Common myeloid progenitor, CD34-positive (primary cell): ENCODE measurements at regions of chr1 and their contacts with region 1.

Region 1: DNA sequence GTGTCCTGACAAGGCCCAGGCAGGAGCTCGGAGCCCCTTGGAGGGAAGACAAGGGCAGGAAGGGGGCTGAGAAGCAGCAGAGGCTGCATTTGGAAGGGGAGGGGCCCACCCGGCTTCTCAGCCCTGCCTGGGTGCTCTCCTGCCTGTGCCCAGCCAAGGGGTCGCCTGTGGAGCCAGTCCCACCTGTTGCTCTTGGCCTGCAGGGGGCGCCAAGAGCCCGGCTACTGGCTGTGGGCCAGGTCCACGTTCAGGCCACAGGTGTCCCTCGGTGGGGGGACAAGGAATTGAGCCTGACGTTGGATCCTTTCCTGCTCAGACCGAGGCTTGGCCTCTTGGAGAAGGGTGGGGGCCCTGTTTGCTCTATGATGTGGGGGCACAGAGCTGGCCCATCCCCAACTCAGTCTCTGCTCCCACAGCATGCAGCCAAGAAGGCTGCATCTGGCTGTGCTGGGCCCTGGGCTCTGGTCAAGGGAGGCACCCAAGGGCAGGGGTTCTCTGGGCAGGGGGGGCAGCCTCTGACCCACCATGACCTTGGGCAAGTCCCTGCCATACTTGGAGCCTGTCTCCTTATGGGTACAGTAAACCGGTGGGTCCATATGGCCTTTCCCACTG is 10.9 kb downstream of the WNT4 start:
- DNase-seq: peak; percentile 39 to 55 (median 44)
- H3K4me3 ChIP-seq: no peak overlapping the region
- H3K27ac ChIP-seq: no peak overlapping the region
- H3K4me1 ChIP-seq: peaks cover 0 to 11% (median 8%) of the 10 kb centered on the region in 4 experiments
- H3K27me3 ChIP-seq: peaks cover 0 to 11% (median 3%) of the 10 kb centered on the region in 5 experiments

Region 2: GRCh38 chr1:21042929-21043605 is 1088.9 kb before region 1 on chr1:
- CTCF ChIA-PET with region 1: no interaction called
- POLR2A ChIA-PET with region 1: no interaction called
- DNase-seq: no peak
- H3K4me3 ChIP-seq: no peak overlapping the region
- H3K27ac ChIP-seq: no peak overlapping the region
- H3K4me1 ChIP-seq: peaks cover 6 to 42% (median 11%) of the 10 kb centered on the region in 4 experiments
- H3K27me3 ChIP-seq: no peaks in the 10 kb centered on the region

Region 3: GRCh38 chr1:22142315-22143064 is 10.5 kb after region 1 on chr1:
- CTCF ChIA-PET with region 1: interaction called, 22 read pairs
- POLR2A ChIA-PET with region 1: no interaction called
- DNase-seq: peak in 2 of 3 donors; percentile 19 to 34
- H3K4me3 ChIP-seq: peak overlapping the region; percentile 16 to 65 (median 48)
- H3K27ac ChIP-seq: no peak overlapping the region
- H3K4me1 ChIP-seq: peaks cover 0 to 13% (median 9%) of the 10 kb centered on the region in 4 experiments
- H3K27me3 ChIP-seq: peaks cover 0 to 76% (median 40%) of the 10 kb centered on the region in 5 experiments

Region 4: DNA sequence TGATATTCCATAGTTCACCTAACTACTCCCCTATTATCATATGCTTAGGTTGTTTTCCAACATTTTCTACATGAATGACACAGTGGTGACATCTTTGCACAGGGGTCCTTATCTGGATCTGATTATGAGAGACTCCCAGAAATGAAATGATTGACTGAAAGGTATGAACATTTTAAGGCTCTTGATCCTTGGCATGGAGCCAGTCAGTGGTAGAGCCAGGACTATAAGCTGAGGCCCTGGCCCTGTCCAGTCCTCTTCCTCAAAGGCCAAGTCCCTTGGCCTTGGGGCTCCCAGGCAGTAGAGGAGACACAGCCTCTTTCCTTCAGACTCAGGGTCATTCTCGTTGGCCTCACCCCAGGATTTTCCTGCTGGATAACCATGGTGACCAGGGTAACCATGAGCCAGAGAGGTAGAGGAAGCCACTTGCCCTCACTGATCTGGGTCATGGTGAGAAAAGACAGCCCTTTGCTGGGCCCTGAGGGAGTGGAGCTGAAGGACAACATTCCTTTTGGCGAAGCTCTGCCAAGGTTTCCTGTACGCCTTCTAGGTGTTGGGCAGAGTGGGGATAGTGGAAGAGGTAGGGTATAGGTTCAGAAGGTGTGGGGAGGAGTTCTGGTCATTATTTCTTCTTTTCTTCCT is 63.9 kb after region 1 on chr1:
- CTCF ChIA-PET with region 1: no interaction called
- POLR2A ChIA-PET with region 1: no interaction called
- DNase-seq: no peak
- H3K4me3 ChIP-seq: no peak overlapping the region
- H3K27ac ChIP-seq: no peak overlapping the region
- H3K4me1 ChIP-seq: no peaks in the 10 kb centered on the region
- H3K27me3 ChIP-seq: peaks cover 0 to 21% (median 5%) of the 10 kb centered on the region in 5 experiments